Naive thymus-derived CD4-positive, alpha-beta T cell (primary cell): ENCODE measurements at regions of chr12 and their contacts with region 1.

Region 1: GRCh38 chr12:88153959-88154358 is 11.9 kb downstream of the TMTC3 start:
- DNase-seq: no peak
- ATAC-seq: no peak
- H3K4me3 ChIP-seq: no peak overlapping the region
- H3K4me3 Mint-ChIP-seq: no peak overlapping the region
- H3K27ac ChIP-seq: no peak overlapping the region
- H3K27ac Mint-ChIP-seq: no peak overlapping the region
- H3K4me1 ChIP-seq: no peaks in the 10 kb centered on the region
- H3K4me1 Mint-ChIP-seq: peaks cover 3 to 18% (median 15%) of the 10 kb centered on the region in 7 donors
- H3K27me3 ChIP-seq: no peaks in the 10 kb centered on the region
- H3K27me3 Mint-ChIP-seq: no peaks in the 10 kb centered on the region

Region 2: DNA sequence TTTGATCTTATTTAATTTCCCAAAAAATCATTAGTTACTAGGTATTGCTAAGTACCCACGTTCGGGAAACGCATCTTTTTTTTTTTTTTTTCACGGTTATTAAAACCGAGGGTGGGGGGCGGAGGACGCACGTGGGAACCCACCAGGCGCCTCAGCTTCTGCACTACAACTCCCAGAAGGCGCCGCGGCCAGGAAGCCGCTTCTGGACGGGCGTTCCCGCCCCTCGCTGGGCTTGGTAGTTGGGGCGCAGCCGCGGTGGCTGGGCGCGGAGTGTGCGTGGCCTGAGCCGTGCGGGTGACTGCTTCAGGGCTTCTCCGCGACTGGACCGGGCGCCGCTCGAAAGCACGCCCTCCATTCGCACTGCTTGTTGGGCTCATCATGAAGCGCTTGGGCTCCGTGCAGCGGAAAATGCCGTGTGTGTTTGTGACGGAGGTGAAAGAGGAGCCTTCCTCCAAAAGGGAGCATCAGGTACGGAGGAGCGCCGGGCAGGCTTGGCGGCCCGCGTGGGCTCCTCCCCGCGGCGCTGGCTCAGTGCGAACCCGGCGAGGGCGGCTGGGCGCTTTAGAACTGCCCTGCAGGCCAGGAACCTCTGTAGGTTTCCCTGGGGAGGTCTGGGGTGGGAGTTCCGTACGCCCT is 118.6 kb before region 1 on chr12:
- CTCF ChIA-PET with region 1: no interaction called
- POLR2A ChIA-PET with region 1: no interaction called
- intact Hi-C with region 1: no loop called
- DNase-seq: peak; percentile 75 to 89 (median 85)
- ATAC-seq: peak; percentile 99
- H3K4me3 ChIP-seq: peak overlapping the region; percentile 89
- H3K4me3 Mint-ChIP-seq: peak overlapping the region; percentile 92 to 99 (median 96)
- H3K27ac ChIP-seq: peak overlapping the region; percentile 81
- H3K27ac Mint-ChIP-seq: peak overlapping the region; percentile 86 to 98 (median 92)
- H3K4me1 ChIP-seq: peaks cover 14 to 19% of the 10 kb centered on the region in 2 donors
- H3K4me1 Mint-ChIP-seq: peaks cover 22 to 64% (median 53%) of the 10 kb centered on the region in 7 donors
- H3K27me3 ChIP-seq: no peaks in the 10 kb centered on the region
- H3K27me3 Mint-ChIP-seq: no peaks in the 10 kb centered on the region

Region 3: GRCh38 chr12:88393017-88393767 is 239.2 kb after region 1 on chr12:
- CTCF ChIA-PET with region 1: no interaction called
- POLR2A ChIA-PET with region 1: no interaction called
- intact Hi-C with region 1: loop called in 1 of 2 experiments (anchors 5 kb)
- DNase-seq: no peak
- ATAC-seq: no peak
- H3K4me3 ChIP-seq: no peak overlapping the region
- H3K4me3 Mint-ChIP-seq: no peak overlapping the region
- H3K27ac ChIP-seq: no peak overlapping the region
- H3K27ac Mint-ChIP-seq: no peak overlapping the region
- H3K4me1 ChIP-seq: no peaks in the 10 kb centered on the region
- H3K4me1 Mint-ChIP-seq: no peaks in the 10 kb centered on the region
- H3K27me3 ChIP-seq: no peaks in the 10 kb centered on the region
- H3K27me3 Mint-ChIP-seq: peaks cover 0 to 4% (median 0%) of the 10 kb centered on the region in 5 donors